ENCODE measurements at regions of chr11 and their contacts with region 1.

Region 1: GRCh38 chr11:18634140-18635032 is at the start of gene SPTY2D1:
- DNase-seq: peak; percentile 99
- H3K4me3 Mint-ChIP-seq: peak within 1 kb of the TSS; percentile 89
- H3K27ac Mint-ChIP-seq: peak within 1 kb of the TSS; percentile 99
- H3K4me1 Mint-ChIP-seq: peaks cover 22% of the 10 kb centered on the region
- H3K27me3 Mint-ChIP-seq: no peaks in the 10 kb centered on the region
- total RNA-seq, gene SPTY2D1: 18.7 to 23.4 TPM

Region 2: GRCh38 chr11:18243783-18244362 is 390.5 kb before region 1 on chr11:
- CTCF ChIA-PET with region 1: interaction called, 3 read pairs
- POLR2A ChIA-PET with region 1: no interaction called
- intact Hi-C with region 1: loop called (anchors 5 kb)
- DNase-seq: peak; percentile 73
- H3K4me3 Mint-ChIP-seq: no peak overlapping the region
- H3K27ac Mint-ChIP-seq: no peak overlapping the region
- H3K4me1 Mint-ChIP-seq: peaks cover 16% of the 10 kb centered on the region
- H3K27me3 Mint-ChIP-seq: peaks cover 7% of the 10 kb centered on the region

Region 3: DNA sequence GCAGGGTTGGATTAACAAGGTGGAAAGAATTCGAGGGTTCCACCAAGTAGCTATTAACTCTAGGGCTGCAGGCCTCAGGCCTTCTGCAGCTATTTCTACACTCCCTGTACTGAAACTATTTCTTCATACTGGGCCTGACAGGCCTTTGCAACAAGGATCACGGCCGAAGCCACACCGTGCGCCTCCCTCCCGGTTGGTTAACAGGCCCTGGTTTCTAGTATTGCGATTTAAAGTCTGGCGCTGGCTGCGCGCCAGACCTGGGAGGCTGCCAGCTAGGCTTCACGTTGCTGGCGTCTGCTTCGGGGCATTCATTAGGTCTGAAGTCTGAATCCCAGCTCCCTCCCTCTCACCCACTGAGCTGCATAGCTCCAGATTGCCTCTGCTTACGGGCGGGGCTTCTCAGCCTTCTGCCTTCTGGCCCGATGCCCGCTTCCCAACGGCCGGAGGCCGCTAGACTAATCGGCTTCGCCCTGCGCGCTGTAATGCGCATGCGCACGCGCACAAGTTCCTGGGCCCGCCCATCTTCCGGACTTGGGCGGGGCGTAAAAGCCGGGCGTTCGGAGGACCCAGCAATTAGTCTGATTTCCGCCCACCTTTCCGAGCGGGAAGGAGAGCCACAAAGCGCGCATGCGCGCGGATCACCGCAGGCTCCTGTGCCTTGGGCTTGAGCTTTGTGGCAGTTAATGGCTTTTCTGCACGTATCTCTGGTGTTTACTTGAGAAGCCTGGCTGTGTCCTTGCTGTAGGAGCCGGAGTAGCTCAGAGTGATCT is 238.5 kb before region 1 on chr11:
- CTCF ChIA-PET with region 1: no interaction called
- POLR2A ChIA-PET with region 1: interaction called, 8 read pairs
- intact Hi-C with region 1: loop called (anchors 1 kb)
- DNase-seq: peak; percentile 98
- H3K4me3 Mint-ChIP-seq: peak overlapping the region; percentile 98
- H3K27ac Mint-ChIP-seq: peak overlapping the region; percentile 98
- H3K4me1 Mint-ChIP-seq: peaks cover 63% of the 10 kb centered on the region
- H3K27me3 Mint-ChIP-seq: no peaks in the 10 kb centered on the region

Region 4: GRCh38 chr11:18588297-18589252 is 45.8 kb before region 1 on chr11 and contains the start of gene UEVLD:
- CTCF ChIA-PET with region 1: interaction called, 3 read pairs
- POLR2A ChIA-PET with region 1: interaction called, 22 read pairs
- intact Hi-C with region 1: loop called (anchors 1 kb)
- DNase-seq: peak; percentile 81
- H3K4me3 Mint-ChIP-seq: no peak within 1 kb of the TSS
- H3K27ac Mint-ChIP-seq: no peak within 1 kb of the TSS
- H3K4me1 Mint-ChIP-seq: peaks cover 10% of the 10 kb centered on the region
- H3K27me3 Mint-ChIP-seq: no peaks in the 10 kb centered on the region
- total RNA-seq, gene UEVLD: 20.9 to 26.2 TPM

Region 5: GRCh38 chr11:18669220-18669598 is 34.8 kb after region 1 on chr11:
- CTCF ChIA-PET with region 1: no interaction called
- POLR2A ChIA-PET with region 1: interaction called, 6 read pairs
- intact Hi-C with region 1: loop called (anchors 1 kb)
- DNase-seq: peak; percentile 51
- H3K4me3 Mint-ChIP-seq: peak overlapping the region; percentile 9
- H3K27ac Mint-ChIP-seq: peak overlapping the region; percentile 46
- H3K4me1 Mint-ChIP-seq: peaks cover 54% of the 10 kb centered on the region
- H3K27me3 Mint-ChIP-seq: no peaks in the 10 kb centered on the region

Measured in activated CD4-positive, alpha-beta memory T cell treated with anti-CD3 and anti-CD28 coated beads for 36 hours (primary cell).